ENCODE measurements at regions of chr14 and their contacts with region 1.

Region 1: DNA sequence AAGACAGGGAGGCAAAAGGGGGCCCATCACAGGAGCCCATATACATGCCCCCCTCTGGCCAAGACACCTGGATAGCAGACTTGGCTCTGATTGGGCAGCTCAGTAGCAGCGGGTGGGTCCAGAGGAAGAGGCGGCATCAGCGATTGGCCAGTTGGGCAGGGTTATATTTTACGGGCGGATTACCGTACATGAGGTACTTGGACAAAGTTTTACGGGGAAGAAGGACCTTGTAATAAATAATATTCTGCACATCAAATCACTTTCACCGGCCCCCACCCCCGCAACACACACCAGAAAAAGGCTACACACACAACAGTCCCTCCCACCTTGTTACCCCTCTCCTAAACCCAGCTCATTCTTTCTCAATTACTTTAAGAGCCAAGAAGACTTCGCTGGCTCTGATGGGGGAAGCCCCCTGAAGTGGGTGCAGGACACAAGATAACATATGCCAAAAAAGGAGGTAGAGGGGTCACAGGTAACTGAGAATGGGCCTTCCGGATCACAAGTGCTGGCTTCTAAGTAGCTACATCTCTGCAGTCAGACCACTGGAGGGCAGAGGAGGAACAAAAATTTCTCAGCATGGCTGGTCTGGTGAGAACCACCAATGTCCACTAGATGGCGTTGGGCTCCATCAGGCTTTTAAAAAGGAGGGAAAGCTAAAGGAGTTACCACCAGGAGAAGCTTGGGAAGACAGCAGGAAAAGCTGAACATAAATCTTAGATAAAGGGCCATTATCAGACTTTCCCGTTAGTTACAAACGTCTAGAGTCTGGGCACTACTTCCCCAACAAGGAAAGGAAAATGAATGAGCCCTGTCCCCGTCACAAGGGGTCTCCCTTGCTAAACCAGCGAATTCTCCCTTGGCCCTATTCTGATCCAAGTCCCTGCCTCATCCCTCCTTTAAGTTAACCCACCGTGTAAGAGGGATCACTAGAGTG is 11.4 kb upstream of the CDH24 start:
- DNase-seq: peak; percentile 86
- ATAC-seq: peak; percentile 70
- H3K4me3 Mint-ChIP-seq: peak overlapping the region; percentile 48
- H3K27ac Mint-ChIP-seq: peak overlapping the region; percentile 71; the same call in 1 of the 2 replicates
- H3K4me1 Mint-ChIP-seq: peaks cover 38% of the 10 kb centered on the region
- H3K27me3 Mint-ChIP-seq: no peaks in the 10 kb centered on the region
- CTCF ChIP-seq: peak; percentile 74

Region 2: DNA sequence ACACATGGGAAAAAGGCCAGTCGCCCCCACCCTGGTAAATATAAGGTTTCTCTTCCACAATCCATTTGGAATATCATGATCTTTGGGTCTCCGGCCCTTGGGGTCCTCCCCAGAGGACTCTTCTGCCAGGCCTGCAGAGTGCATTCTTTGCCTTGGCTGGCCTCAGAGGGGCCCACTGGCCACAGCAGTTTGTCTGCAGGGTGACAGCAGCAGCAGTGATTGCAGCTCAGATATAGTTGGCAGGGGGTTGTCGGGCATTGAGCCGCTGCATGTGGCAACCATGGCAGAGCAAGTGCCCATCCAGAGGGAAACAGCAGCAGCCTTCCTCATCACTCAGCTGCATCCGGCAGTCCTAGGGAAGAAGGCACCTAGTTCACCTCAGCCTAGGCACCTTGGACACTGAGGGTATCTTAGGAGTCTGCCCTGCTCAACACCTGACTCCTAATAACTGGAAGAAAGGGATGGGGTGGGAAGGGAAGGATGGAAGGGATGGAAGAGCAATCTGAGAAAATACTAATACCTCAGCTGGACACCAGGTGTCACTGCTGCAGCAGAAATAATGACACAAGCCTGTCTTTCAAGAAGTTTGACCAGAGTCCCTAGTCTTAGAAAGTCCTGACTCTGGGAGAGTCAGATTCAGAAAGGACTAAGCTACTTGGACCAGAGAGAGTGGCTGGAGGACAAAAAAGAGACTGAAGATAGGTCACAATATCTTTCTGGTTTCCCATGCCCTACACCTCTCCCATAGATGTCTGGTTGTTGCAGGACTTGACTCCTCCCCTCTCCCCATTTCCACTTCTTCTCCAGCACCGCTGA is 95.3 kb before region 1 on chr14:
- CTCF ChIA-PET with region 1: interaction called, 14 read pairs
- POLR2A ChIA-PET with region 1: no interaction called
- DNase-seq: peak; percentile 50
- ATAC-seq: peak; percentile 16
- H3K4me3 Mint-ChIP-seq: no peak overlapping the region
- H3K27ac Mint-ChIP-seq: peak overlapping the region; percentile 17
- H3K4me1 Mint-ChIP-seq: peaks cover 27% of the 10 kb centered on the region
- H3K27me3 Mint-ChIP-seq: no peaks in the 10 kb centered on the region
- CTCF ChIP-seq: peak; percentile 51

Region 3: GRCh38 chr14:23041729-23042128 is 27.0 kb before region 1 on chr14:
- CTCF ChIA-PET with region 1: interaction called, 11 read pairs
- POLR2A ChIA-PET with region 1: no interaction called
- DNase-seq: no peak
- ATAC-seq: no peak
- H3K4me3 Mint-ChIP-seq: no peak overlapping the region
- H3K27ac Mint-ChIP-seq: no peak overlapping the region
- H3K4me1 Mint-ChIP-seq: peaks cover 5% of the 10 kb centered on the region; the same call in 1 of the 2 replicates
- H3K27me3 Mint-ChIP-seq: no peaks in the 10 kb centered on the region
- CTCF ChIP-seq: no peak

Region 4: DNA sequence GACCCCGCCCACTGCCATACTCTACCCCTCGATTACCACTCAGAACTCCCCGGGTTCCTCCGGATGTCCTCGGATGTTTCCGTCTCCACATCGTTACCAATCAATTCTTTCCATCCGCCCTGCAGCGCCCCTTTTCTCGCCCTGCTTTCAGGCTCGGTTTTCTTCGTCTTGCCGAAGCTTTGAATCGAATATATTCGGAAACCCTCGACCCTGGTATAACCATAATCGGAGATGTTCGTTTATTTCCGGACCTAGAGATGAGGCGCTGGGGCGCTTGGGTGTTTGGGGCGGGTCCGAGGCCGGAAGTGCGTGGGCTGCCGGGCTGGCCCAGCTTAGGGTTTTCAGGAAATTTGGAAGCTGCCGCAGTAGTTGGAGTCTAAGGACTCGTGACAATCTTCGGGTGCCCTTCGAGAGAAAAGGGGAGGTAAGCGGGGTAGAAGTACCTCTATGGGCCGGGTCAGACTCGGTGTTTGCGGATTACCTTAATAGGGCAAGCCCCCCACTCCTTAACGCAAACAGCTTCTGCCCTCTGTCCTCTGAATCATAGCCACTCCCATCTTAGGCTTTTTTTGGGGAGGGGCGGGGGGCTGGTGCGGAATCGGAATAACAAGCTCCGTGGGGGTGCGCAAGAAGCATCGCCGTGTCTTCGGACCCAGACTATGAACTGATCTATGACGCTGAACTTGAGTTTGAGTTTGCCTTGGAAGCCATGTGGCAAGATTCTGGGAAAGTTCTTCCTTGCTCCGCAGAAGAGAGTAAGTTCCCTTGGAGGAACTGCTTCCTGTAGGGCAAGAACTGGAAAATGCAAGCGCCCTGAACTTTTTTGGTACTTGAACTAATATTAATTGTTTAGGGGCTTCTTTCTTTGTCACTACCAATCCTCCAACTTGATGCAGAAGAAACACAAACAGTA is 26.7 kb after region 1 on chr14 and contains the start of gene C14orf119:
- CTCF ChIA-PET with region 1: interaction called, 105 read pairs
- POLR2A ChIA-PET with region 1: interaction called, 24 read pairs
- DNase-seq: peak; percentile 100
- ATAC-seq: peak; percentile 91
- H3K4me3 Mint-ChIP-seq: no peak within 1 kb of the TSS
- H3K27ac Mint-ChIP-seq: no peak within 1 kb of the TSS
- H3K4me1 Mint-ChIP-seq: peaks cover 37% of the 10 kb centered on the region
- H3K27me3 Mint-ChIP-seq: no peaks in the 10 kb centered on the region; the same call in 1 of the 2 replicates
- CTCF ChIP-seq: no peak
- total RNA-seq, gene C14orf119: 67.8 to 81.3 TPM (median 71.3 TPM) in 3 replicates

Region 5: GRCh38 chr14:23154964-23155587 is 86.3 kb after region 1 on chr14:
- CTCF ChIA-PET with region 1: interaction called, 12 read pairs
- POLR2A ChIA-PET with region 1: no interaction called
- DNase-seq: peak; percentile 44
- ATAC-seq: peak; percentile 68
- H3K4me3 Mint-ChIP-seq: peak overlapping the region; percentile 32
- H3K27ac Mint-ChIP-seq: peak overlapping the region; percentile 93
- H3K4me1 Mint-ChIP-seq: peaks cover 58% of the 10 kb centered on the region
- H3K27me3 Mint-ChIP-seq: no peaks in the 10 kb centered on the region
- CTCF ChIP-seq: no peak

Region 6: DNA sequence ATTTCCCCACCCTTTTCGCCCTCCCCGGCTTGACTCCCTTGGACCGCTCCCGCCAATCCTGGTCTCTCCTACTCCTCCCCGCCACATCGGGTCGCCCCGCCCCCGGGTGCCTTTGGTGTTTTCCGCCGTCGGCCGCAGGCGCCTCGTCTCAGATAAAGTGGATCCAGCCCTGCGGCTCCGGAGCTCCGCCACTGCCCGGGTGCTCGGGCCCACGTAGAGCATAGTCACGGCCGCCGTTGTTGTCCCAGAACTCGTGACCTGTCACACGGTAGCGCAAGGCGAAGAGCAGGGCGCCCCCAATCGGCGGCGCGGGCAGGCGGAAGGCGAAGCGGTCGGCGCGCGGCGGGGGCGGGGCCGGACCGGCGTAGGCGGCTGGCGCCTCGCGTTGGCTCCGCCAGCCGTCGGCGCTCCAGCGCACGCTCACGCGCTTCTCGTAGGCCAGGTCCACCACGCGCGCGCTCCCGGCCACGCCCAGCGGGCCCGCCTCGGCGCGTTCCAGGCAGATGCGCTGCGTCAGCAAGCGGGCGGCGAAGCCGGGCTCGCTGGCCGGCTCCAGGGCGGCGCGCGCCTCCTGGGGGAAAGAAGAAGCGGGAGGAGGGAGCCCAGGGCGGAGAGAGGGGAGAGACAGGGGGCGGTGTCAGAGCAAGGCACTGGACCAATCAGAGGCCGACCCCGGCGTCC is 232.7 kb after region 1 on chr14:
- CTCF ChIA-PET with region 1: interaction called, 11 read pairs
- POLR2A ChIA-PET with region 1: no interaction called
- DNase-seq: peak; percentile 98
- ATAC-seq: peak; percentile 83
- H3K4me3 Mint-ChIP-seq: peak overlapping the region; percentile 85
- H3K27ac Mint-ChIP-seq: peak overlapping the region; percentile 91
- H3K4me1 Mint-ChIP-seq: peaks cover 10% of the 10 kb centered on the region
- H3K27me3 Mint-ChIP-seq: peaks cover 63% of the 10 kb centered on the region
- CTCF ChIP-seq: peak; percentile 60; the same call in 1 of the 2 replicates